ENCODE measurements at regions of chr18 and their contacts with region 1.

Region 1: DNA sequence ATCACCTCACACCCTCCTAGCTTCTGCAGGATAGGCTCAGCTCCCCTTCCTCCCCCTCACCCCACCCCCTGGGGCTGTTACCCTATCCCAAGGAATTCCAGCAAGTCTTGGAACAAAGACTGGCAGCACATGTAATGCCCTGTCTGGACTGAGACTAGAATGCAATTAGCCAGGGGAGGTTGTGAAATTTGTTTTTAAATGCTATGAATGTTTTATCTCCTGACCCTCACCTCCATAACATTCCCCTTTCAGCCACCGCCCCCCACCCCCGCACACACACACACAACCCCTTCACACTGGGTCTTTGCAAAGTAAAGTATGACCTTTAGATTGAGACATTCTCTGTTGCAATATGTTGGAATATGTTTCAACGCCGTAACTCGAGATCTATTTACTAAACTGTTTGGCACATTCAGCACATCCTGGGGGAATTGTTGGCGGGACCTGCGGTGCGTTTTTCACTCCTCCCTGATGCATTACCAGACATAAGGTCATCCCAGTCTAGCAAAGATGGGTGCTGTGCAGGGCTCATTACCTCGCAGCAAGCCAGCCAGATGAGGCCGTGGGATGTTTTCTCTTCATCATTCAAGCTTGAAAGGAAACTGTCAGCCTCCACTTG is 290.7 kb upstream of the SLC14A2 start:
- DNase-seq: peak; percentile 83 to 92
- H3K4me3 ChIP-seq: no peak overlapping the region
- H3K27ac ChIP-seq: peak overlapping the region in 1 of 2 donors; percentile 57
- H3K4me1 ChIP-seq: peaks cover 3 to 66% (median 24%) of the 10 kb centered on the region in 4 donors
- H3K27me3 ChIP-seq: no peaks in the 10 kb centered on the region
- CTCF ChIP-seq: no peak

Region 2: DNA sequence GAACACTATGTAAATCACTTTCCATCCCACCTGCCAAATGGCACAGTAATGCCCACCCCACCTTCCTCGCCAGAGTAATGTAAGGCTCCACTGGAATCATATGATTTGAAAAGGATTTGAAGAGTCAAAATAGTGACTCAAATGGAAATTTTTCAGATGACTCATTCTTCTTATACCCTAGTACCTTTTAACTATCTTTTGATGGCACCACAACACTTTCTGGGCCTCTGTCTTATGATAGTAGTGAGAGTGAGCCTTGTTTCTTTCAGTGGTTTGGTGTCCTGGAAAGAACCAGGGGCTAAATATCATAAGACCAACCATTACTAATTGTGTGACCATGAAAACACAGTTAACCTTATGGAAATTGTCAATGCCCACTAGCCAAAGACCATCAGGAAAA is 55.3 kb after region 1 on chr18:
- intact Hi-C with region 1: loop called (anchors 10 kb)
- DNase-seq: no peak
- H3K4me3 ChIP-seq: no peak overlapping the region
- H3K27ac ChIP-seq: no peak overlapping the region
- H3K4me1 ChIP-seq: no peaks in the 10 kb centered on the region
- H3K27me3 ChIP-seq: no peaks in the 10 kb centered on the region
- CTCF ChIP-seq: no peak

Measured in tibial artery (tissue), 4 donors.